ENCODE measurements at regions of chr17 and their contacts with region 1.

Region 1: DNA sequence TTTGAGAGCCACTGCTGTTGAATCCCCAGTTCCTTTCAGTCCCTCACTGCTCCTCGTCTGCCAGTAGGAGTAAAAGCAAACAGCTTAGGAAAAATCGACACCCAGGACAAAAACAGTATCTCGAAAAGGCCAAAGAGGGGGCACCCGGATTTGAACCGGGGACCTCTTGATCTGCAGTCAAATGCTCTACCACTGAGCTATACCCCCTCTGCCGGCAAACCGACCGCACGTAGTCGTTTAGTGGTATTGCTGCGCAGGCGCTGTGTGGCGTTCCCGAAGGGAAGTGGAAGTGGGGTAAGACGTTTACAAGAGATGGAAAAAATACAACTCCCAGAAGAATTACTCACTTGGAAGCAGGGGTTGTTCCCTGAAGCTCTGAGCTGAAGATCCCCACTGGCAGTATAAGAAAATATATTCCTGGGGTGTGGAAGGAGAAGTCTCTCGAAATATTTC is 2.2 kb upstream of the PLXDC1 start:
- DNase-seq: peak; percentile 87 to 98 (median 95)

Region 2: GRCh38 chr17:38853292-38854219 is 300.1 kb before region 1 on chr17 and contains the start of gene RPL23:
- intact Hi-C with region 1: loop called (anchors 5 kb)
- DNase-seq: peak; percentile 82 to 98 (median 94)

Region 3: GRCh38 chr17:38982858-38983746 is 170.5 kb before region 1 on chr17:
- intact Hi-C with region 1: loop called (anchors 5 kb)
- DNase-seq: peak in 31 of 42 donors; percentile 12 to 75 (median 44)

Region 4: DNA sequence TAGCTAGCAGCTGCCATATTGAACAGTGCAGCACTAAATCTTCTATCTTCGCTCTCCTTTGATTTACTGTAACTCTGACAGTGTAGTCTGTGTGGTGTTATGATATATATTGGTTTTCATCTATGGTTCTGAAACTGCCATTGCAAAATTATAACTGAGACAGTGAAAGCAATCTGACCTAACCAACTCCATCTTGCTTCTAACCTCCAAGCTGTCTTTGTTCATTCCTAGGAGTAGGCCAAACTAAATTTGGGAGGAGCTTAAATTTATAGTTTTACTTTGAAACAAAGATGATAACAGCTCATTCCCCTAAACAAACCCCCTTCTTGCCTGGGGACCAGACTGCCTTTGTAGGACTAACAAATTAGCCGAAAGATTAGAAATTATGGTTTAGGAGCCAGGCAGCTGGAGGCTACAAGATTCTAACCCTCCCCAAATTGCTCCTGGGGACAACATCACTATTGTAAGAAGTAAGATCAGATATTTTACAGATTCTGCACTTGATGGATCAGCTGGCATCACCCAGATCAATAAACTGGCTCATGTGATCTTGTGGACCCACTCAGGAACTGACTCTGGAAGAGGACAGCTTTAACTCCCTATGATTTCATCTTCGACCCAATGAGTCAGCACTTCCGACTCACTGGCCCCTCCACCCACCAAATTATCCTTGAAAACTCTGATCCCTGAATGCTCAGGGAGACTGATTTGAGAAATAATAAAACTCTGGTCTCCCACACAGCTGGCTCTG is 139.4 kb before region 1 on chr17:
- intact Hi-C with region 1: no loop called
- DNase-seq: no peak

Region 5: GRCh38 chr17:39069114-39069756 is 84.4 kb before region 1 on chr17:
- intact Hi-C with region 1: loop called (anchors 5 kb)
- DNase-seq: peak in 15 of 42 donors; percentile 10 to 70 (median 44)